ENCODE measurements at regions of chr2 and their contacts with region 1.

Region 1: GRCh38 chr2:27071277-27071989 is at the start of gene OST4:
- DNase-seq: peak; percentile 85 to 89 (median 88)
- H3K4me3 ChIP-seq: peak within 1 kb of the TSS; percentile 82
- H3K4me3 Mint-ChIP-seq: peak within 1 kb of the TSS; percentile 91 to 98 (median 97)
- H3K27ac ChIP-seq: peak within 1 kb of the TSS; percentile 96
- H3K27ac Mint-ChIP-seq: peak within 1 kb of the TSS; percentile 88 to 99 (median 98)
- H3K4me1 ChIP-seq: peaks cover 44% of the 10 kb centered on the region
- H3K4me1 Mint-ChIP-seq: peaks cover 58 to 82% (median 75%) of the 10 kb centered on the region in 3 donors
- H3K27me3 ChIP-seq: no peaks in the 10 kb centered on the region
- H3K27me3 Mint-ChIP-seq: no peaks in the 10 kb centered on the region
- total RNA-seq, gene OST4: 346 to 353 TPM

Region 2: GRCh38 chr2:27059141-27059820 is 12.2 kb before region 1 on chr2:
- CTCF ChIA-PET with region 1: interaction called, 6 read pairs
- POLR2A ChIA-PET with region 1: interaction called, 15 read pairs
- DNase-seq: no peak
- H3K4me3 ChIP-seq: no peak overlapping the region
- H3K4me3 Mint-ChIP-seq: no peak overlapping the region
- H3K27ac ChIP-seq: no peak overlapping the region
- H3K27ac Mint-ChIP-seq: peak overlapping the region in 2 of 8 donors; percentile 17 to 42
- H3K4me1 ChIP-seq: no peaks in the 10 kb centered on the region
- H3K4me1 Mint-ChIP-seq: peaks cover 2 to 12% (median 11%) of the 10 kb centered on the region in 3 donors
- H3K27me3 ChIP-seq: no peaks in the 10 kb centered on the region
- H3K27me3 Mint-ChIP-seq: peaks cover 0 to 2% of the 10 kb centered on the region in 2 donors

Region 3: DNA sequence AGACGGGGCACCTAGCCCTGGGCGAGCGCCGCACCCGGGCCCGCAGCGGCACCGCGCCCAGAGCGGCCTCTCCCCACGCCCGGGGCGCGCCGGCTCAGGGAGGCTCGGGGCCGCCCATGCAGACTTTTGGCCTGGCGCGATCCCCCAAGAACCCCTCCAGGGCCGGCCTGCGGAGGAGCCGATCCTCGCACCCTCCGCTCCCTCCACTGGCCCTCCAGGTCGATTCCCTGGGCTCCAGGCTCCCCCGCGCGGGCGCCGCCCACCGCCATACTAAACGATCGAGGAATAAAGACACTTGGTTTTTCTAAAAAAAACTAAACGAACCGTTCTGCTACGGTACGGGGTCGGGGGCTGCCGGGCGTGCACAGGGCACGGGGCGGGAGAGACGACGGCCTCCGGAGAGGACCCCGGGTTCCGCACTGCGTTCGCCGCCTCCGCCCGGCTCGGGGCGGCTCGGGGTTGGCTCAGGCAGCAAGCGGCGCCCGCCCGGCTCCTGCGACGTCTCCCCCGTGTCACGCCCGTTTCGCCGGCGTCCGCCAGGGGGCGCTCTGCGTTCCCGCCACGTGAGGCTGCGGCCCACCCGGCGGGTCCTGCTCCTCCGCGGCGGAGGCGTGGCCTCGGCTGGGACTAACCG is 14.8 kb after region 1 on chr2:
- CTCF ChIA-PET with region 1: interaction called, 10 read pairs
- POLR2A ChIA-PET with region 1: interaction called, 37 read pairs
- DNase-seq: peak; percentile 97 to 99 (median 97)
- H3K4me3 ChIP-seq: peak overlapping the region; percentile 60
- H3K4me3 Mint-ChIP-seq: peak overlapping the region; percentile 79 to 94 (median 82)
- H3K27ac ChIP-seq: peak overlapping the region; percentile 75
- H3K27ac Mint-ChIP-seq: peak overlapping the region; percentile 46 to 94 (median 73)
- H3K4me1 ChIP-seq: peaks cover 32% of the 10 kb centered on the region
- H3K4me1 Mint-ChIP-seq: peaks cover 20 to 25% (median 24%) of the 10 kb centered on the region in 3 donors
- H3K27me3 ChIP-seq: no peaks in the 10 kb centered on the region
- H3K27me3 Mint-ChIP-seq: no peaks in the 10 kb centered on the region

Region 4: DNA sequence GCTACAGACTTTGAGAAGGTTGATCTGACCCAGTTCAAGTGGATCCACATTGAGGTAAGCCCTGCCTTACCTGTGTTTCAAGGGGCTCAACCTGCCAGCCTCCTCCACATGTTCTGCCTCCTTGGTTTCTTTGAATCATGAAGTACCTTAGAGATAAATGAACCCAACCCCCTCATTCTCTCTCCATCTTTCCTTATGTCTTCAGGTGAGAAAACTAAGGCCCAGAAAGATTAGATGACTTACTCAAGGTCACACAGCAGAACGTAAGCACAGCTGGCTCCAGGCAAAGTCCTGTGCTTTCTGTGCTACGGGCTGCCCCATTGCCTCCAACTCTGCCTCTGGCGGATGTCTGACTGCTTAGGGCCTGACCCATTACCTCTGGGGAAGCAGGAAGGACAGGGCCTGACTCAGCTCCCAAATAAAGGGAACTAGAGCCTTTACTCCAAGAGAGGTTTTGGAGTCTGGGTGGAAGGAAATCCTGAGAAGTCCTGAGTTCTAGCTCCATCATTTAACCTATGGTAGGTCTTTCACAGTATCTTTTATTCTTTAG is 25.4 kb after region 1 on chr2:
- CTCF ChIA-PET with region 1: no interaction called
- POLR2A ChIA-PET with region 1: no interaction called
- DNase-seq: no peak
- H3K4me3 ChIP-seq: no peak overlapping the region
- H3K4me3 Mint-ChIP-seq: peak overlapping the region in 1 of 7 donors; percentile 76
- H3K27ac ChIP-seq: no peak overlapping the region
- H3K27ac Mint-ChIP-seq: no peak overlapping the region
- H3K4me1 ChIP-seq: peaks cover 8% of the 10 kb centered on the region
- H3K4me1 Mint-ChIP-seq: peaks cover 7 to 15% (median 12%) of the 10 kb centered on the region in 3 donors
- H3K27me3 ChIP-seq: no peaks in the 10 kb centered on the region
- H3K27me3 Mint-ChIP-seq: no peaks in the 10 kb centered on the region

Measured in CD8-positive, alpha-beta memory T cell (primary cell).